Caco-2 (cell line): ENCODE measurements at regions of chr2 and their contacts with region 1.

Region 1: DNA sequence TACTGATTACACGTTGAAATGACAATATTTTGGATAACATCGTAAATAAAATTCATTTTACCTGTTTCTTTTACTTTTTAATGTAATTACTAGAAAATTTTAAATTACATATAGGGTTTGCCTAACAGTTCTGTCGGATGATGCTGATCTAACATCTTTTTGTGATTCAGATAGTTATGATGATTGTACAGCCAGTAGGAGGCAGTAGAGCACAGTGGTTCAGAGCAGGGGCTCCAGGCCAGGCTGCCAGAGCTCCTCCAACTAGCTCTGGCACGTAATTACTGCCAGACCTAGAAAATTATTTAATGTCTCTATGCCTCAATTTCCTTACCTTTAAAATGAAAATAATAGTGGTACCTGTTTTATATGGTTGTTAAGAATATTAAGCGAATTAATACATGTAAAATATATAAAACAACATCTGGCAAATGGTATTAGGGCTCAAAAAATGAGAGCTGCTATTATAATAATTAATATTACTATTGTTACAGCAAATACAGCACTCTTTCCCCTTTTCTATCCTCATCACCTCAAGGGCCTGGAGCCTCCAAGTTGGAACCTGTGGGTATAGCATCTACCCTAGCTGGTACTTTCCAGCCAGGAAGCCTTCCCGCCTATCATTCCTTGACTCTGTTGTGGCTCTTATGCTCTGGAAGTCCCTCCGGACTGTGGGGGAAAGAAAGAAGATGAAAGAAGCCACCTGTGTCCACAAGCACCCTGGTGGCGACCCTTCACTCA is 47.7 kb upstream of the PLA2R1 start:
- DNase-seq: peak; percentile 47 to 74
- H3K4me3 ChIP-seq: no peak overlapping the region
- H3K4me3 Mint-ChIP-seq: no peak overlapping the region
- H3K27ac Mint-ChIP-seq: no peak overlapping the region
- H3K4me1 ChIP-seq: no peaks in the 10 kb centered on the region
- H3K4me1 Mint-ChIP-seq: no peaks in the 10 kb centered on the region
- H3K27me3 ChIP-seq: no peaks in the 10 kb centered on the region
- H3K27me3 Mint-ChIP-seq: no peaks in the 10 kb centered on the region
- CTCF ChIP-seq: peak; percentile 76 to 84

Region 2: DNA sequence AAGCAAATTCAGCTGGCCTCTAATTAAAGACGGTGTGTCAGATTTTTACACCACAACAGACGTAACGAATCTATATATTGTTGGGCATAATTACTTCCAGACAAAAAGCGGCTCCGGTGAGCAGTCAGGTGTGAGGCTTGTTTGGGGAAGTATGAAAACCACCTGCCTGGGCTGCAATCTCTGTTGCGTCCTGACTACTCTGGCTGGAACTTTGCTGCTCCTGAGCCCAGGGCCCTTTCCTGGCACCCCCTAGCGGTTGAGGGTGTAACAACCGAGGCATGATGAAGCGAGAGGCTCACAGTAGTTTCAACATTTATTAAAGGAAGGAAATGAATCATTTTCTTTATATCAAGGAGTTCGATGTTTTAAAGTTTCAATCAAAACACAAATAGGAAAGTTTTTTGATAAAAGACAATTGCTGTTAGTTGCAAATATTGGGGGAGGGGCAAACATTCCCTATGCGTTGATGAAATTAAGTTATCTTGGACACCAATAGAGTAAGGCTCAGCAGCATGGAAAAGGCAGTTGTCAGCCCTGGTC is 100.6 kb after region 1 on chr2:
- CTCF ChIA-PET with region 1: interaction called, 7 read pairs
- POLR2A ChIA-PET with region 1: no interaction called
- intact Hi-C with region 1: loop called (anchors 1 kb)
- DNase-seq: peak; percentile 74 to 85
- H3K4me3 ChIP-seq: no peak overlapping the region
- H3K4me3 Mint-ChIP-seq: no peak overlapping the region
- H3K27ac Mint-ChIP-seq: no peak overlapping the region
- H3K4me1 ChIP-seq: peaks cover 6% of the 10 kb centered on the region; the same call in 1 of the 2 replicates
- H3K4me1 Mint-ChIP-seq: peaks cover 10% of the 10 kb centered on the region
- H3K27me3 ChIP-seq: no peaks in the 10 kb centered on the region; the same call in 1 of the 2 replicates
- H3K27me3 Mint-ChIP-seq: no peaks in the 10 kb centered on the region
- CTCF ChIP-seq: peak; percentile 84 to 96

Region 3: DNA sequence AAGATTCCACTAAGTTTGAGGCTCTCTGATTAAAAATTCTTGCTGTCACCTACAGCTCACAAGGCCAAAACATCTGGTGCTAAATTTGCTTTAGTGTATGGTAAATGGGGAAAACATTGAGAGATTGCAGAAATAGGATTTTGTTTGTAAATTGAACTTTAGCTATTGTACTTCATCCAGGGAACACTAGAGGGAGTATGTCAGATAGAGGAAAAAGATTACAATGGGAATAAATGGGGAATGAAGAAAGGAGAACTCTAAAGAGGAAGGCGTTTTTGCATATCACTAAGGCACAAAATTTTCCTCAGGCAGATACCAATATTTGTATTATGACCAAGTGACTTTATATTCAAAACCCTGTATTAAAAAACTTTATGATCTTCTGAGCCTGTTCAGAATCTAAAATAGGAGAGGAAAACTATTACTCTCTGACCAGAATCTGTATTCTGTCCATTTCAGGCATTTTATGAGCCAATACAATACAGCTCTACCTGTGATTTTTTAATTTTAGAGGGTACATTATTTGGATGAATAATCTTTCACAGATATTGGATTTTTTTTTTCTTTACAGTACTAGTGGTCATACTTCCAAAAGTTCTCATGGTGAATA is 142.3 kb after region 1 on chr2:
- CTCF ChIA-PET with region 1: interaction called, 4 read pairs
- POLR2A ChIA-PET with region 1: no interaction called
- intact Hi-C with region 1: loop called (anchors 1 kb)
- DNase-seq: peak in 1 of 2 experiments; percentile 31
- H3K4me3 ChIP-seq: no peak overlapping the region
- H3K4me3 Mint-ChIP-seq: no peak overlapping the region
- H3K27ac Mint-ChIP-seq: no peak overlapping the region
- H3K4me1 ChIP-seq: peaks cover 15% of the 10 kb centered on the region; the same call in 1 of the 2 replicates
- H3K4me1 Mint-ChIP-seq: peaks cover 7% of the 10 kb centered on the region
- H3K27me3 ChIP-seq: no peaks in the 10 kb centered on the region
- H3K27me3 Mint-ChIP-seq: no peaks in the 10 kb centered on the region
- CTCF ChIP-seq: peak; percentile 75 to 80

Region 4: DNA sequence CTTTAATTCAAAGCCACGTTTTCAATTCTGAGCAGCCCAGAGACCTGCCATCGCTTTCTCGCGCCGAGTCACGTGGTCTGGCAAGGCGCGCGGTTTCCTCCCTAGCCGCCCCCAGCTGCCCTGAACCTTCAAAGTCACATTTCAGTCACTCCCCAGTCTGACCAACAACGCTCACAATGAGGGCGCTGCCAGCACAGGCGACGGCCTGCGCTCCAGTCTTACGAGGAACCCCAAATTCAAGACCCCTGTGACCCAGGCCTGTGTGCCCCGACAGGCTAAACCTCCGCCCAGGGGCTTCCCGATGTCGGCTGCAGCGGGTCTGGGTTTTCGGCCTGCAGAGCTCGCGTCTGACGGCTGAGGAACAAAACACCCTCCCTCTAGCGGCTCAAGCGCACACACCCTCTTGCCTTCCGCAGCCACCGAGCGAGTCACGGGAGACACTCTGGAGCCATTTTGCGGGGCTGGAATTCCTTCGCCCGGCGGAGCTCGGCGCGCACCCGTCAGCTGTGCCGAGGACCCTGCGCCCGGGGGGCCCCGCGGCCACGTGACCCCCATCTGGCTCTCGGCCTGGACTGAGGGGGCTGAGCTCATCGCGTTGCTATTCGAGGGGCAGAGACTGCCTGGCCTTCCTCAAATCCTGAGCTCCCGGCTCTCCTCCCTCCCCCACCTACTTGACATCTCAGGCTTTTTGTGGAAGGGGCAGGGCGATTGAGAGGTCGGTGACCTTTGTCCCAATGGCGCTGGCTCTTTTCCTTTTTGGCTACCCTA is 159.9 kb after region 1 on chr2:
- CTCF ChIA-PET with region 1: interaction called, 17 read pairs
- POLR2A ChIA-PET with region 1: no interaction called
- intact Hi-C with region 1: loop called (anchors 1 kb)
- DNase-seq: peak; percentile 90 to 92
- H3K4me3 ChIP-seq: peak overlapping the region; percentile 65
- H3K4me3 Mint-ChIP-seq: peak overlapping the region; percentile 92
- H3K27ac Mint-ChIP-seq: peak overlapping the region; percentile 98
- H3K4me1 ChIP-seq: peaks cover 29% of the 10 kb centered on the region
- H3K4me1 Mint-ChIP-seq: peaks cover 13% of the 10 kb centered on the region
- H3K27me3 ChIP-seq: no peaks in the 10 kb centered on the region
- H3K27me3 Mint-ChIP-seq: no peaks in the 10 kb centered on the region
- CTCF ChIP-seq: peak; percentile 48 to 82

Region 5: GRCh38 chr2:161063157-161063954 is 953.3 kb after region 1 on chr2:
- CTCF ChIA-PET with region 1: interaction called, 5 read pairs
- POLR2A ChIA-PET with region 1: no interaction called
- intact Hi-C with region 1: loop called (anchors 1 kb)
- DNase-seq: peak; percentile 83 to 88
- H3K4me3 ChIP-seq: no peak overlapping the region
- H3K4me3 Mint-ChIP-seq: peak overlapping the region; percentile 13
- H3K27ac Mint-ChIP-seq: no peak overlapping the region
- H3K4me1 ChIP-seq: 0 out of 2 replicates have a peak, but pooled peaks cover 4% of the 10 kb centered on the region
- H3K4me1 Mint-ChIP-seq: peaks cover 6% of the 10 kb centered on the region
- H3K27me3 ChIP-seq: no peaks in the 10 kb centered on the region; the same call in 1 of the 2 replicates
- H3K27me3 Mint-ChIP-seq: no peaks in the 10 kb centered on the region
- CTCF ChIP-seq: peak; percentile 92 to 93